ENCODE measurements at regions of chr12 and their contacts with region 1.

Region 1: GRCh38 chr12:56189176-56189917 is at the start of gene SMARCC2:
- DNase-seq: peak; percentile 86
- H3K4me3 Mint-ChIP-seq: peak within 1 kb of the TSS; percentile 90
- H3K27ac Mint-ChIP-seq: peak within 1 kb of the TSS; percentile 93
- H3K4me1 Mint-ChIP-seq: peaks cover 58% of the 10 kb centered on the region
- H3K27me3 Mint-ChIP-seq: no peaks in the 10 kb centered on the region
- total RNA-seq, gene SMARCC2: 140 to 173 TPM

Region 2: GRCh38 chr12:54680374-54680773 is 1509.0 kb before region 1 on chr12:
- CTCF ChIA-PET with region 1: no interaction called
- POLR2A ChIA-PET with region 1: no interaction called
- DNase-seq: peak; percentile 33
- H3K4me3 Mint-ChIP-seq: no peak overlapping the region
- H3K27ac Mint-ChIP-seq: no peak overlapping the region
- H3K4me1 Mint-ChIP-seq: no peaks in the 10 kb centered on the region
- H3K27me3 Mint-ChIP-seq: peaks cover 46% of the 10 kb centered on the region

Region 3: DNA sequence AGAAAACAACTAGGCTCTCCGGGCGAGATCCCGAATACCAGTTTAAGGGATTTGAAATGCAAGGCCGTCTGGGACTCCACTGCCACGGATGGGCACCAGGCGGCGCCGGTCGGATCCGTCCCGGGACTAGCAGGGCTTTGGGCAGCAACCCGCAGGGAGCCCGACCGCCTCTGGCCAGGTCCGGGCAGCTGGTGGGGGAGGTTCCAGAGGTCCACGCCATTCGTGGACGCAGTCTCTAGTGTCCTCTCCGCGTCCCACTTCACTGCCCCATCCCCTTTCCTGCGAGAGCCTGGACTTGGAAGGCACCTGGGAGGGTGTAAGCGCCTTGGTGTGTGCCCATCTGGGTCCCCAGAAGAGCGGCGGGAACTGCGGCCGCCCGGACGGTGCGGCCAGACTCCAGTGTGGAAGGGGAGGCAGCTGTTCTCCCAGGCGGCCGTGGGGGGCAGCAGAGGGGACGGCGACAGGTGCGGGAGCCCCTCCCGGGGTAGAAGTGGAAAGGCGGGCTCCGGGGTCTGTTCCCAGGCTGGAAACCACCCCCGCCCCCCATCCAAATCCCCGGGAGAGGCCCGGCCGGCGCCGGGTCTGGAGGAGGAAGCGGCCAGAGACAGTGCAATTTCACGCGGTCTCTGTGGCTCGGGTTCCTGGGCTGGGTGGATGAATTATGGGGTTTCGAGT is 110.2 kb before region 1 on chr12:
- CTCF ChIA-PET with region 1: no interaction called
- POLR2A ChIA-PET with region 1: no interaction called
- DNase-seq: peak; percentile 50
- H3K4me3 Mint-ChIP-seq: peak overlapping the region; percentile 73
- H3K27ac Mint-ChIP-seq: peak overlapping the region; percentile 31
- H3K4me1 Mint-ChIP-seq: peaks cover 17% of the 10 kb centered on the region
- H3K27me3 Mint-ChIP-seq: peaks cover 31% of the 10 kb centered on the region

Region 4: DNA sequence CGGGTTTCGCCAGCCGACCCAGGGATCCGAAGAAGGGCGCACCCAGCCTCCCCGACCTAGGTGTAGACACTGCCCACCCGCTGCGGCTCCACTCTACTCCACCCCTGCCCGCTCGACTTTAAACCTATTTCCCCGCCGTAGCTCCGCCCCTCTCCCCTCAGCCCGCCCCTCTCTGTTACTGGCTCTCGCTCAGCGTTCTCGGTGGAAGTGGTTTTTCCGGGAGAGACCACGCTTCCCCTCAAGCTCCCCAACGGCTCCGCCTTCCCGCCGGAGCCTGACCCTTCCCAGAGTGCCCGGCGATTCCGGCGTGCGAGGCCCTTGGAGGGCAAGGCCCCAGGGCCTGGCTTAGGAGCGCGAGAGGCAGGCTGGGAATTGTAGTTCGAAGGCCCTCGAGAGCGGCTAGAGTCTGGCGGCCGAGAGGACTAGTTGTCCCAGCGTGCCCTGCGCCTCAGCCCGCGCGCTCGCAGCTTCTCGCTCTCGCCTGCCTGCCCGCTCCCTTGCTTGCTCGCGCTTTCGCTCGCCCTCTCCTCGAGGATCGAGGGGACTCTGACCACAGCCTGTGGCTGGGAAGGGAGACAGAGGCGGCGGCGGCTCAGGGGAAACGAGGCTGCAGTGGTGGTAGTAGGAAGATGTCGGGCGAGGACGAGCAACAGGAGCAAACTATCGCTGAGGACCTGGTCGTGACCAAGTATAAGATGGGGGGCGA is 85.1 kb before region 1 on chr12 and contains the start of gene PA2G4:
- CTCF ChIA-PET with region 1: interaction called, 11 read pairs
- POLR2A ChIA-PET with region 1: interaction called, 4 read pairs
- DNase-seq: peak; percentile 99
- H3K4me3 Mint-ChIP-seq: peak within 1 kb of the TSS; percentile 99
- H3K27ac Mint-ChIP-seq: peak within 1 kb of the TSS; percentile 98
- H3K4me1 Mint-ChIP-seq: peaks cover 62% of the 10 kb centered on the region
- H3K27me3 Mint-ChIP-seq: no peaks in the 10 kb centered on the region
- total RNA-seq, gene PA2G4: 244 to 289 TPM

Region 5: DNA sequence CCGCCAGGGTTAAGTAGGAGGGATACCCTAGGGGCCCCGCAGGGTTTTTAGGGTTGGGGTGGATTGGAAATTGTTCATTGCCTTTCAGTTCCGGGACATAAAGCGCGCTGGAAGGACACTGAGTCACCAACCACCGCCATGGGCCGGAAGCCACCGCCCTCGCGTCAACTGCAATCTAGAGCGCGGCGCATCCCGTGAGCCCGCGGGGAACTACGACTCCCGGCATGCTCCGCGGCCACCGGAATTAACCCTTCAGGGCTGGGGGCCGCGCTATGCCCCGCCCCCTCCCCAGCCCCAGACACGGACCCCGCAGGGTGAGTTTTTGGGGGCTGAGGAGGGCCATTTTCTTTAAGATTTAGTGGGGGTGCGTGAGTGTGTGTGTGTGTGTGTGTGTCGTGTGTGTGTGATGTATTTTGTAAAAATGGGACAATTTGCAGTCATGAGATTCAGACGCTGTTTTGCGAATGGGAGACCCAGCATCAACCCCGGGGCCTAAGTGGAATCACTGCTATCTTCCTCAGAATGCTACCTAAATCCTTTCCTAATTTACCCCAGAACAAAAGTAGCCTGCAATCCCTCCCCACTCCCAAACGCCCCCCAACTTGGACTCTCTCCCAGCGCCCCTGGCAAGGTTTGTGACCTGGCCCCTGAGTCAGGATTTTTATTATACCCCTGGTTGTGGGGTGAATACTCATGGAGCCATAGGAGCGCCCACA is 36.9 kb before region 1 on chr12 and contains the start of gene MYL6B:
- CTCF ChIA-PET with region 1: interaction called, 14 read pairs
- POLR2A ChIA-PET with region 1: no interaction called
- DNase-seq: peak; percentile 96
- H3K4me3 Mint-ChIP-seq: peak within 1 kb of the TSS; percentile 83
- H3K27ac Mint-ChIP-seq: peak within 1 kb of the TSS; percentile 98
- H3K4me1 Mint-ChIP-seq: peaks cover 52% of the 10 kb centered on the region
- H3K27me3 Mint-ChIP-seq: no peaks in the 10 kb centered on the region
- total RNA-seq, gene MYL6B: 56.6 to 63.4 TPM

Region 6: GRCh38 chr12:56178347-56178746 is 11.0 kb before region 1 on chr12:
- CTCF ChIA-PET with region 1: interaction called, 44 read pairs
- POLR2A ChIA-PET with region 1: no interaction called
- DNase-seq: no peak
- H3K4me3 Mint-ChIP-seq: no peak overlapping the region
- H3K27ac Mint-ChIP-seq: peak overlapping the region; percentile 19
- H3K4me1 Mint-ChIP-seq: no peaks in the 10 kb centered on the region
- H3K27me3 Mint-ChIP-seq: no peaks in the 10 kb centered on the region

Region 7: GRCh38 chr12:56247923-56248322 is 58.6 kb after region 1 on chr12:
- CTCF ChIA-PET with region 1: interaction called, 13 read pairs
- POLR2A ChIA-PET with region 1: no interaction called
- DNase-seq: no peak
- H3K4me3 Mint-ChIP-seq: no peak overlapping the region
- H3K27ac Mint-ChIP-seq: no peak overlapping the region
- H3K4me1 Mint-ChIP-seq: no peaks in the 10 kb centered on the region
- H3K27me3 Mint-ChIP-seq: no peaks in the 10 kb centered on the region

Region 8: DNA sequence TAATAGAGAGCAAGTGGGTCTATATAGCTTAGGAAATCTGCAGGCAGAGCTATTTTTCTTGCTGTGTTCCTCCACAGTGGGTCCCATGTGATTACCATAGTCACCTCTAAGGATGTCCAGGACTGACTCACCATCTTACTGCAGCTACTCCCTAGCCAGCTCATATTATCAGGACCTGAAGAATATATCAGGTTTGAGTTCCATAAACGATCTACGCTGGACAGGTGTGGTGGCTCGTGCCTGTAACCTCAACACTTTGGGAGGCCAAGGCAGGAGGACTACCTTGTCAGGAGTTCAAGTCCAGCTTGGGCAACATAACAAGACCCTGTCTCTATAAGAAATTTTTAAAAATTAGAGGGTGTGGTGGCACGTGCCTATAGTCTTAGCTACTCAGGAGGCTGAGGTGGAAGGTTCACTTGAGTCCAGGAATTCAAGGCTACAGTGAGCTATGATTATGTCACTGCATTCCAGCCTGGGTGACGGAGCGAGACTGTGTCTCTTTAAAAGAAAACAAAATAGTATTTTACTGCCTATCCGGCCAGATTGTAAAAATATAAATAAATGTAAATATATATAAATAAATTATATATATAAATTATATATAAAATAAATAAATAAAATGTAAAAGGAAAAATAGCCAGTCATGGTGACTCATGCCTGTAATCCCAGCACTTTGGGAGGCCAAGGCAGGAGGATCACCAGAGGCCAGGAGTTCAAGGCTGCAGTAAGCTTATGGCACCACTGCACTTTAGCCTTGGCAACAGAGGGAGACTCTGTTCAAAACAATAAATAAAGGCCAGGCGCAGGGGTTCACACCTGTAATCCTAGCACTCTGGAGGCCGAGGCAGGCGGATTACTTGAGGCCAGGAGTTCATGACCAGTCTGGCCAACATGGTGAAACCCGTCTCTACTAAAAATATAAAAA is 272.1 kb after region 1 on chr12:
- CTCF ChIA-PET with region 1: interaction called, 14 read pairs
- POLR2A ChIA-PET with region 1: no interaction called
- DNase-seq: no peak
- H3K4me3 Mint-ChIP-seq: no peak overlapping the region
- H3K27ac Mint-ChIP-seq: no peak overlapping the region
- H3K4me1 Mint-ChIP-seq: peaks cover 8% of the 10 kb centered on the region
- H3K27me3 Mint-ChIP-seq: no peaks in the 10 kb centered on the region

Region 9: GRCh38 chr12:57276935-57277563 is 1087.7 kb after region 1 on chr12:
- CTCF ChIA-PET with region 1: no interaction called
- POLR2A ChIA-PET with region 1: no interaction called
- DNase-seq: peak; percentile 13
- H3K4me3 Mint-ChIP-seq: no peak overlapping the region
- H3K27ac Mint-ChIP-seq: no peak overlapping the region
- H3K4me1 Mint-ChIP-seq: peaks cover 25% of the 10 kb centered on the region
- H3K27me3 Mint-ChIP-seq: no peaks in the 10 kb centered on the region